Naive thymus-derived CD8-positive, alpha-beta T cell (primary cell): ENCODE measurements at regions of chr22 and their contacts with region 1.

Region 1: DNA sequence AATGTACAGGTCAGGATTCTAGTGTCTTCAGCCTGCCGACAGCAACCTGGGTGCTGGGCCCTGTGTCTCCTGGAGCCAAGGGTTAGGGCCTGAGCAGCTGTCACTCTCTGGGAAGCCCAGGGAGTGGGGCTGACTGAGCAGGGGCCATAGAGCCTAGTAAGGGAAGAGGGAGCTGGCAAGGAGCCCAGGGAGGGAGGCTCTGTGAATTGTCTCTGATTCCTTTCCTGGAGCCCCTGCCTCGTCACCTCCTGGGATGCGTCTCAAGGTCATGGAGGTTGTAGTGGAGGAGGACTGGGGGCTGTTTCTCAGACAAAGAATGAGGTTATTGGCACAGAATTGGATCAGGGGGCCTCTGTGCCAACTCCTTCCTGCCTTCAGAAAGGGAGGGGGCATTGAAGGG is 11.8 kb downstream of the SOX10 start:
- DNase-seq: no peak
- ATAC-seq: no peak
- H3K4me3 Mint-ChIP-seq: no peak overlapping the region
- H3K27ac Mint-ChIP-seq: peak overlapping the region in 1 of 10 donors; percentile 51
- H3K4me1 Mint-ChIP-seq: peaks cover 0 to 11% (median 3%) of the 10 kb centered on the region in 4 donors
- H3K27me3 Mint-ChIP-seq: no peaks in the 10 kb centered on the region

Region 2: GRCh38 chr22:38941488-38941987 is 969.0 kb after region 1 on chr22:
- POLR2A ChIA-PET with region 1: interaction called, 10 read pairs
- DNase-seq: no peak
- ATAC-seq: peak in 1 of 2 donors; percentile 58
- H3K4me3 Mint-ChIP-seq: peak overlapping the region; percentile 46 to 82 (median 75)
- H3K27ac Mint-ChIP-seq: peak overlapping the region in 3 of 10 donors; percentile 17 to 51 (median 27)
- H3K4me1 Mint-ChIP-seq: peaks cover 19 to 30% (median 20%) of the 10 kb centered on the region in 4 donors
- H3K27me3 Mint-ChIP-seq: peaks cover 26 to 66% (median 53%) of the 10 kb centered on the region in 5 donors